ENCODE measurements at regions of chr16 and their contacts with region 1.

Region 1: DNA sequence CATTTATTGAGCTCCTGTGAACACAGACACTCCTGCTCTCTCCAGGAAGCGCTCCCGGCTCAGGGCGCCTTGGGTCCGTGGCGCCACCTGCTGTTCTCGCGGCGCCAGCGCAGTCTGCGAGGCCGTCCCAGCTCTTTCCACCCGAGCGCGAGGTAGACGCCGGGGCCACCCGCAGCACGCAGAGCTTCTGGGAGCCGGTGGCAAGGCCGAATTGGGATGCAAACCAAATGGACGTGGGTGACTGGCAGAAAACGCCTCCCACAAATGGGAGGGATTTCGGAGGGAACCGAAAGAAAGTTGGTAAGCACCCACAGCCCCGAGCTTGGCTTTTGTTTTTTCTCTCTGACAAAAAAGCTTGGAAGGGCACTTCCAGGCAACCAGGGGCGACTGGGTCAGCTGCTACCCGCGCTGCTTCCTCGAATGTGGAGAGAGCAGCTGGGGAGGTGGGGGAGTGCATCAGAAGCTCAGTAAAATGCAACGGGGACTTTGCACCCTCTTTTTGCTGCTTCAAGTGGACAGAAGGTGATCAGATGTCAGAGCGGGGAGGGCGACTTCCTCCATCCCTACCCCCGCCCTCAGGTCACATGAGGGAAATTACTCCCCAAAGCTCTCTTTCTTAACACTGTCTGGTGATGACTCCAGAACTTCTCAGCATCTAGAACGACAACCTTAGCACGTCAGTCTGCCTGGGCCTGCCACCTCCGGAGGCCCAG is 13.5 kb upstream of the N4BP1 start:
- DNase-seq: peak; percentile 71 to 91 (median 78)
- ATAC-seq: peak; percentile 96
- H3K4me3 ChIP-seq: peak overlapping the region; percentile 53 to 55
- H3K4me3 Mint-ChIP-seq: peak overlapping the region; percentile 84
- H3K27ac ChIP-seq: no peak overlapping the region
- H3K27ac Mint-ChIP-seq: peak overlapping the region; percentile 76
- H3K4me1 ChIP-seq: peaks cover 23% of the 10 kb centered on the region
- H3K4me1 Mint-ChIP-seq: peaks cover 32% of the 10 kb centered on the region
- H3K27me3 ChIP-seq: no peaks in the 10 kb centered on the region
- H3K27me3 Mint-ChIP-seq: no peaks in the 10 kb centered on the region
- CTCF ChIP-seq: peak; percentile 99

Region 2: GRCh38 chr16:46711106-46712058 is 1912.1 kb before region 1 on chr16:
- CTCF ChIA-PET with region 1: no interaction called
- POLR2A ChIA-PET with region 1: no interaction called
- intact Hi-C with region 1: no loop called
- DNase-seq: no peak
- ATAC-seq: no peak
- H3K4me3 ChIP-seq: no peak overlapping the region
- H3K4me3 Mint-ChIP-seq: no peak overlapping the region
- H3K27ac ChIP-seq: no peak overlapping the region
- H3K27ac Mint-ChIP-seq: no peak overlapping the region
- H3K4me1 ChIP-seq: no peaks in the 10 kb centered on the region
- H3K4me1 Mint-ChIP-seq: no peaks in the 10 kb centered on the region
- H3K27me3 ChIP-seq: no peaks in the 10 kb centered on the region
- H3K27me3 Mint-ChIP-seq: no peaks in the 10 kb centered on the region
- CTCF ChIP-seq: no peak

Region 3: GRCh38 chr16:48347191-48347865 is 276.1 kb before region 1 on chr16:
- CTCF ChIA-PET with region 1: interaction called, 114 read pairs
- POLR2A ChIA-PET with region 1: interaction called, 3 read pairs
- intact Hi-C with region 1: no loop called
- DNase-seq: peak in 2 of 9 experiments; percentile 13 to 50
- ATAC-seq: peak; percentile 60
- H3K4me3 ChIP-seq: no peak overlapping the region
- H3K4me3 Mint-ChIP-seq: no peak overlapping the region
- H3K27ac ChIP-seq: no peak overlapping the region
- H3K27ac Mint-ChIP-seq: peak overlapping the region; percentile 27
- H3K4me1 ChIP-seq: peaks cover 3% of the 10 kb centered on the region
- H3K4me1 Mint-ChIP-seq: peaks cover 9% of the 10 kb centered on the region
- H3K27me3 ChIP-seq: no peaks in the 10 kb centered on the region
- H3K27me3 Mint-ChIP-seq: no peaks in the 10 kb centered on the region
- CTCF ChIP-seq: no peak

Region 4: GRCh38 chr16:48373258-48374029 is 250.0 kb before region 1 on chr16:
- CTCF ChIA-PET with region 1: interaction called, 11 read pairs
- POLR2A ChIA-PET with region 1: interaction called, 3 read pairs
- intact Hi-C with region 1: no loop called
- DNase-seq: no peak
- ATAC-seq: no peak
- H3K4me3 ChIP-seq: no peak overlapping the region
- H3K4me3 Mint-ChIP-seq: no peak overlapping the region
- H3K27ac ChIP-seq: no peak overlapping the region
- H3K27ac Mint-ChIP-seq: no peak overlapping the region
- H3K4me1 ChIP-seq: peaks cover 5% of the 10 kb centered on the region
- H3K4me1 Mint-ChIP-seq: peaks cover 26% of the 10 kb centered on the region
- H3K27me3 ChIP-seq: no peaks in the 10 kb centered on the region
- H3K27me3 Mint-ChIP-seq: no peaks in the 10 kb centered on the region
- CTCF ChIP-seq: no peak

Region 5: DNA sequence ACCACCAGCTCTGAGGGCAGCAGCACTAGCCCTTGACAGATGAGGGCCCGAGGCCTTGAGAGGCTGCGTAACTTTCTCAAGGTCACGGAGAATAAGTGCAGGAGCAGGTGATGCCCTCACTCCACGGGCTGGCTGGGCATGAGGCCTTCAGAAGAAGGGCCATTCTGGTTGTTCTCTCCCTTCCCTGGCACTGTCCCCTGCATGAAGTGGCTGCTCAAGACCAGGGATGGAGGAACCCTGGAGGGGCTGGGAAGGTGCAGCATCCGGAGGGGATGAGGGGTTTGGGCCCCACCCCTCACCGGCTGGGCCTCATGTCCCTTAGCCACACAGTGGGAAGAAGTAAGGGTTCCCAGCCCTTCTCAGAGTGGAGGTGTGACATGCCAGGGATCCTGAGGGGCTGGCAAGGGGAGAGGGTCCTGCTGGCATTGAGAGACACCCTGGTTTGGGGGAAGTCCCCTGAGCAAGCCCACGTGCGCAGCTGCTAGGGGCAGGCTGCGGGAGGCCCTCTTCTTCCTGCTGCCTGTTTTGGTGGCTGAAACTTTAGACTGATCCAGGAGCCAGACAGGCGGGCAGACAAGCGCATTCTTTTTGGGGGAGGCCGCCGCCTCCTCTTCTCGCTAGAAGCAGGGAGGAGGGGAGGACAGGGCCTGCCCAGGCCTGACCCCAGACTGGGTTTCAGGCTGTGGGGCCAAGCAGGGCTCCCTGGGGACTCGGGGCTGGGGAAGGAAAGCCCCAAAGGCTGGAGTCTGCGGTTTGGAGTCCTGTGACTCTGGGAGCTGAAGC is 87.4 kb before region 1 on chr16:
- CTCF ChIA-PET with region 1: interaction called, 25 read pairs
- POLR2A ChIA-PET with region 1: interaction called, 6 read pairs
- intact Hi-C with region 1: loop called in 1 of 2 experiments (anchors 1 kb)
- DNase-seq: peak in 3 of 9 experiments; percentile 32 to 49 (median 48)
- ATAC-seq: peak; percentile 24
- H3K4me3 ChIP-seq: no peak overlapping the region
- H3K4me3 Mint-ChIP-seq: no peak overlapping the region
- H3K27ac ChIP-seq: no peak overlapping the region
- H3K27ac Mint-ChIP-seq: no peak overlapping the region
- H3K4me1 ChIP-seq: peaks cover 22% of the 10 kb centered on the region
- H3K4me1 Mint-ChIP-seq: peaks cover 20% of the 10 kb centered on the region
- H3K27me3 ChIP-seq: no peaks in the 10 kb centered on the region
- H3K27me3 Mint-ChIP-seq: no peaks in the 10 kb centered on the region
- CTCF ChIP-seq: no peak

Region 6: GRCh38 chr16:48576927-48577326 is 46.5 kb before region 1 on chr16:
- CTCF ChIA-PET with region 1: interaction called, 21 read pairs
- POLR2A ChIA-PET with region 1: no interaction called
- intact Hi-C with region 1: loop called in 1 of 2 experiments (anchors 5 kb)
- DNase-seq: peak in 1 of 9 experiments; percentile 18
- ATAC-seq: no peak
- H3K4me3 ChIP-seq: no peak overlapping the region
- H3K4me3 Mint-ChIP-seq: no peak overlapping the region
- H3K27ac ChIP-seq: no peak overlapping the region
- H3K27ac Mint-ChIP-seq: peak overlapping the region; percentile 7
- H3K4me1 ChIP-seq: peaks cover 34% of the 10 kb centered on the region
- H3K4me1 Mint-ChIP-seq: peaks cover 68% of the 10 kb centered on the region
- H3K27me3 ChIP-seq: no peaks in the 10 kb centered on the region
- H3K27me3 Mint-ChIP-seq: no peaks in the 10 kb centered on the region
- CTCF ChIP-seq: no peak

Region 7: GRCh38 chr16:48824271-48824670 is 200.8 kb after region 1 on chr16:
- CTCF ChIA-PET with region 1: no interaction called
- POLR2A ChIA-PET with region 1: no interaction called
- intact Hi-C with region 1: no loop called
- DNase-seq: no peak
- ATAC-seq: no peak
- H3K4me3 ChIP-seq: no peak overlapping the region
- H3K4me3 Mint-ChIP-seq: no peak overlapping the region
- H3K27ac ChIP-seq: no peak overlapping the region
- H3K27ac Mint-ChIP-seq: no peak overlapping the region
- H3K4me1 ChIP-seq: no peaks in the 10 kb centered on the region
- H3K4me1 Mint-ChIP-seq: no peaks in the 10 kb centered on the region
- H3K27me3 ChIP-seq: no peaks in the 10 kb centered on the region
- H3K27me3 Mint-ChIP-seq: peaks cover 4% of the 10 kb centered on the region
- CTCF ChIP-seq: no peak